Dendritic cell treated with granulocyte-macrophage colony-stimulating factor and Interleukin-4, amounts not matched to agents 40 ng/mL and 50 ng/mL, for 4 days (primary cell): ENCODE measurements at regions of chr4 and their contacts with region 1.

Region 1: GRCh38 chr4:113394730-113395530 is 345.5 kb downstream of the ANK2 start:
- H3K4me3 Mint-ChIP-seq: no peak overlapping the region
- H3K27ac Mint-ChIP-seq: no peak overlapping the region
- H3K4me1 Mint-ChIP-seq: no peaks in the 10 kb centered on the region
- H3K27me3 Mint-ChIP-seq: no peaks in the 10 kb centered on the region

Region 2: DNA sequence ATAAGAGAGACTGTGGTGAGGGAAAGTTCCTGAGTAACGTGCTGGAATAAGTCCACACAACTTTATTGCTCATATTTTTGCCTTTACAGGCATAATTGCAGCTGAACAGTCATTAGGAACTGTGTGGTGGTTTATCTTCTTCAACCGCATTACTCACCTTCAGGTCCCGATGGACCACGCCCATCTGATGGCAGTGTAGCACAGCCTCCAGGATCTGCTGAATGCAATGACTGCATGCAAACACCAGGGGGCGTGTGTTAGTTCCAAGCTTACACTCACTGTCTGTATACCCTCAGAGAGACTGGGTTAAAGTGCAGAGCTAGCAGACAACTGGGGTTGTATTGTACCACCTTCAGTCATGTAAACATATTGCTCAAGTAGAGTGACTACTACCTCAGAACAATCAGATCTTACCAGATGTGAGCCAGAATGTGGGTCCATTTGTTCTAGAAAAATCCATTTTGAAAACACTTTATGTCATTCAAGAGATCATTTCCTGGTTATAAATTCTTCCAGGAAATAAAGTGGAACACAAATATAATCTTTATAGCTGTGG is 152.6 kb after region 1 on chr4:
- intact Hi-C with region 1: loop called (anchors 10 kb)
- H3K4me3 Mint-ChIP-seq: no peak overlapping the region
- H3K27ac Mint-ChIP-seq: no peak overlapping the region
- H3K4me1 Mint-ChIP-seq: no peaks in the 10 kb centered on the region
- H3K27me3 Mint-ChIP-seq: no peaks in the 10 kb centered on the region

Region 3: GRCh38 chr4:113908829-113909228 is 513.9 kb after region 1 on chr4:
- intact Hi-C with region 1: loop called (anchors 5 kb)
- H3K4me3 Mint-ChIP-seq: no peak overlapping the region
- H3K27ac Mint-ChIP-seq: no peak overlapping the region
- H3K4me1 Mint-ChIP-seq: no peaks in the 10 kb centered on the region
- H3K27me3 Mint-ChIP-seq: peaks cover 3% of the 10 kb centered on the region

Region 4: GRCh38 chr4:114072781-114073180 is 677.9 kb after region 1 on chr4:
- intact Hi-C with region 1: loop called (anchors 1 kb)
- H3K4me3 Mint-ChIP-seq: no peak overlapping the region
- H3K27ac Mint-ChIP-seq: no peak overlapping the region
- H3K4me1 Mint-ChIP-seq: no peaks in the 10 kb centered on the region
- H3K27me3 Mint-ChIP-seq: no peaks in the 10 kb centered on the region

Region 5: DNA sequence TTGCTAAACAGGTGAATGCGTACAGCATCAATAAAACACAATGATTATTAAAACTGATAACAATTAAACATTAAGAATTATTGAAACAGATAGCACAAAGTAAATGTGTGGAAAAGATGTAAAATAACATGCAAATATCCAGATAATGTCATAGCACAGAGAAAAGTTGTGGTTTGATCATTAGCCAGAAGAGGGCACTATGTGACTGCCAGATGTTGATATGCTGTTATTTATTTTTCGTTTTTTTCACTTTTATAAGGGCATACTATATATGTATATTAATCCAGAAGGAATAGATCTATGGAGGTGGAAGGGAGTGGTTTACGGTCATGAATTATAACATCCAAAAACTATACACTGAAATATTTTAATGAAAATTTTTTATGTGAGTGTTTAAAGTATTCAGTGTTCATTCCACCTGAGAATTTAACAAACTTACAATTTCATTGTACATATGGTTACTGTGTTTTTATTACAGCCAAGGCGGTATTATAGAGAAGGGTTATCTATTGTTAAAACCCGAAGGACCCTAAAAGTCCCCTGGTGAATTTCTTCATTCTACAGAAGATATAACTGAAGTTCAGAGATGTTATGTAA is 991.8 kb after region 1 on chr4:
- intact Hi-C with region 1: loop called (anchors 2 kb)
- H3K4me3 Mint-ChIP-seq: no peak overlapping the region
- H3K27ac Mint-ChIP-seq: no peak overlapping the region
- H3K4me1 Mint-ChIP-seq: no peaks in the 10 kb centered on the region
- H3K27me3 Mint-ChIP-seq: no peaks in the 10 kb centered on the region

Region 6: GRCh38 chr4:114694770-114695169 is 1299.8 kb after region 1 on chr4:
- intact Hi-C with region 1: loop called (anchors 2 kb)
- H3K4me3 Mint-ChIP-seq: no peak overlapping the region
- H3K27ac Mint-ChIP-seq: no peak overlapping the region
- H3K4me1 Mint-ChIP-seq: no peaks in the 10 kb centered on the region
- H3K27me3 Mint-ChIP-seq: no peaks in the 10 kb centered on the region

Region 7: GRCh38 chr4:114807759-114808404 is 1413.0 kb after region 1 on chr4:
- intact Hi-C with region 1: loop called (anchors 5 kb)
- H3K4me3 Mint-ChIP-seq: no peak overlapping the region
- H3K27ac Mint-ChIP-seq: no peak overlapping the region
- H3K4me1 Mint-ChIP-seq: no peaks in the 10 kb centered on the region
- H3K27me3 Mint-ChIP-seq: no peaks in the 10 kb centered on the region